ENCODE measurements at regions of chr19 and their contacts with region 1.

Region 1: DNA sequence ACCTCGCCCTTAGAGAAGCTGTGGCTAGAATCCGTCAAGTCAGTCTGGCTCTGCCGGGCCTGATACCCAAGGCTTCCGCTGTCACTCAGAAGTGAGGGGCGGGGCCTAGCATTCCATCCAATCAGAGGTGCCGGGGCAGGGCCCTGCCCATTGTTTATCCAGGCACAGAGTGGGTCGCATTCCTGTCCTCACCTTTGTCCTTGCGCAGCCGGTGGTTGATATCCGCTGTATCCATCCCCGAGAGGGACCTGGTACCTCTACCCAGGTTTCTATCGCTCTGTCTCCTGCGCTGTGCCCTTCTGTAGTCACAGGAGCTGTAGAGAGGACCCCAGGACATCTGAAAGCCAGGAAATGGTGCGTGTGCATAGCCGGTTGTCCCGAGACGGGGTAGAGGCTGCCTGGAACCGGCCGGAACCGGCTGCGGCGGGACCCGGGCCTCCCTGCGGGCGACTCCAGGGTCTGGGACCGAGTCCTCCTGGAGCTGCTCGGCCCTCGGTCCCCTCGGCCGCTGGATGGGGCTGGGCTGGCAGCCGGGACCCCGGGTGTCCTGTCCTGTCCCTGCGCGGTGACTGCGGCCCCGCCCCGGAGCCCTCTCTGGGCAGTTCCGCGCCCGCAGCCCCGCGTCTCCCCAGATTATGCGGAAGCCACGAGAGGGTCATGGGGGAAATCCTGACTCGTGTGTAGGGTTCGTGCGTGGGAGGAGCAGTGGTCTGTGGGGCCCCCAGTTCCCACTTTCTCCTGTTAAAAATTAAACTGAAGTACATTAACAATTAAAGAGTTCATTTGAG is at the start of gene ZNF763:
- DNase-seq: peak; percentile 95
- ATAC-seq: peak; percentile 97 to 99
- total RNA-seq, gene ZNF763: 1.5 to 3.4 TPM

Region 2: GRCh38 chr19:12052497-12053169 is 87.6 kb after region 1 on chr19 and contains the start of gene ZNF878:
- intact Hi-C with region 1: loop called in 1 of 2 experiments (anchors 5 kb)
- DNase-seq: peak; percentile 93
- ATAC-seq: peak; percentile 100
- total RNA-seq, gene ZNF878: 0.29 to 0.73 TPM

Measured in left cardiac atrium (tissue), 4 donors.